Activated T-helper 1 cell treated with anti-CD3 and anti-CD28 coated beads, Interleukin-12 subunit alpha, Interleukin-12 subunit beta, Interleukin-2, Interleukin-4 antibody, amounts not matched to agents 30 ng/mL and 10 ng/mL and 1 ng/mL, durations not matched to agents 14 hours and 24 hours and 36 hours (primary cell): ENCODE measurements at regions of chr2 and their contacts with region 1.

Region 1: DNA sequence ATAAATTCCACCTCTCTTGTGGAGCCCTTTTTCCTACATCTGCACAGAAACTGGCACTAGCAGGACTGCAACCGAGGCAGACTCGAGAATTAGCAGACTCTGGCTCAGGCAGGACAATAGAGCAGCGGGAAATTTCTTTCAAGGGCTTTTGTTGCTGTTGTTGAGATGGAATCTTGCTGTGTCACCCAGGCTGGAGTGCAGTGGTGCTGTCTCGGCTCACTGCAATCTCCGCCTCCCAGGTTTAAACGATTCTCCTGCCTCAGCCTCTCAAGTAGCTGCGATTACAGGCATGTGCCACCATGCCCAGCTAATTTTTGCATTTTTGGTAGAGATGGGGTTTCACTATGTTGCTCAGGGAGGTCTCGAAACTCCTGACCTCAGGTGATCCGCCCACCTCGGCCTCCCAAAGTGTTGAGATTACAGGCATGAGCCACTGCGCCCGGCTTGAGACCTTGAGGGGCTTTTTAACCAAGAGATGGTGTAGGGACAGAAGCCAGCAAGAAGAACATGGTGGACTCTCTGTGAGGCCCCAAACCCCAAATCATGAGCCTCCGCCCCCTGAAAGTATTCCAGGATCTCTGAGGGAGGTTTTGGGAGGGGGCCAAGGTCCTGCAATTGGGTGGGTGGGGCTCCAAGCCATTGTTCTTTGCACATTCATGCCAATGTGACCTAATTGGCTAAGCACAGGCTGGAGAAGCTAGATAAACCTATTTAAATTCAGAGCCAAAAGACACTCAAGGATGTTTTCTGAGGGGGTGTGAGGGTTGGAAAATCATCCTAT is 68.4 kb upstream of the MSH2 start:
- DNase-seq: no peak
- H3K4me3 Mint-ChIP-seq: no peak overlapping the region
- H3K27ac Mint-ChIP-seq: no peak overlapping the region
- H3K4me1 Mint-ChIP-seq: no peaks in the 10 kb centered on the region
- H3K27me3 Mint-ChIP-seq: peaks cover 4% of the 10 kb centered on the region

Region 2: DNA sequence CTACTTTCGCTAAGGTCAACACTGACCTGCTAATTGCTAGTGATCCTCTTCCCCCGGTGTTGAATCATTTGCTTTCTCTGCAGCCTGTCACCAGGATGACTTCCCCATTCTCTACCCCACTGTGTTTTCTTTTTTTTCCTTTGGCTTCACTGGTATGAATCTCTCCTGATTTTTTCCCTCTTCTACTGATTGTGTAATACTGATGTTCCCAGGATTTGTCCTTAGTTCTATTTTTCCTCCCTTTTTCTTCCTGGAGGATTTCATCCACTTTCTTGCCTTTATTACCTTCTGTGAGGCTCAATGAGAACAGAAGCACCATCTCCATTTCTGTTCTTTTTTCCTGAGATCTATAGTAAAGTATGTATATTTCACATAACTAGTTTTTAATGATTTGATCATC is 54.3 kb after region 1 on chr2:
- intact Hi-C with region 1: loop called (anchors 1 kb)
- DNase-seq: no peak
- H3K4me3 Mint-ChIP-seq: no peak overlapping the region
- H3K27ac Mint-ChIP-seq: no peak overlapping the region
- H3K4me1 Mint-ChIP-seq: no peaks in the 10 kb centered on the region
- H3K27me3 Mint-ChIP-seq: peaks cover 20% of the 10 kb centered on the region